AG04450 (cell line): ENCODE measurements at regions of chr17 and their contacts with region 1.

Region 1: GRCh38 chr17:17285951-17286350 is 4.9 kb upstream of the COPS3 start:
- DNase-seq: no peak
- H3K4me3 ChIP-seq: no peak overlapping the region
- H3K27ac ChIP-seq: no peak overlapping the region
- H3K27me3 ChIP-seq: peaks cover 4% of the 10 kb centered on the region
- CTCF ChIP-seq: no peak

Region 2: GRCh38 chr17:17300624-17301568 is 14.9 kb after region 1 on chr17:
- CTCF ChIA-PET with region 1: no interaction called
- POLR2A ChIA-PET with region 1: interaction called, 10 read pairs
- DNase-seq: no peak
- H3K4me3 ChIP-seq: peak overlapping the region; percentile 25; the same call in 1 of the 2 replicates
- H3K27ac ChIP-seq: no peak overlapping the region
- H3K27me3 ChIP-seq: no peaks in the 10 kb centered on the region
- CTCF ChIP-seq: no peak